SK-N-SH (cell line): ENCODE measurements at regions of chr18 and their contacts with region 1.

Region 1: GRCh38 chr18:31722369-31722957 is 38.1 kb upstream of the B4GALT6 start:
- DNase-seq: peak; percentile 76
- H3K4me3 ChIP-seq: peak overlapping the region in 1 of 2 experiments; percentile 27; a peak in 1 of 4 replicates
- H3K27ac ChIP-seq: no peak overlapping the region
- H3K4me1 ChIP-seq: peaks cover 0 to 4% of the 10 kb centered on the region in 2 experiments; a peak in 1 of 4 replicates
- H3K27me3 ChIP-seq: no peaks in the 10 kb centered on the region; the same call in 1 of the 2 replicates
- CTCF ChIP-seq: peak; percentile 86
- EP300 ChIP-seq: no peak
- RAD21 ChIP-seq: peak; percentile 85

Region 2: GRCh38 chr18:31546476-31546875 is 176.0 kb before region 1 on chr18:
- CTCF ChIA-PET with region 1: interaction called, 25 read pairs
- POLR2A ChIA-PET with region 1: no interaction called
- DNase-seq: no peak
- H3K4me3 ChIP-seq: no peak overlapping the region
- H3K27ac ChIP-seq: no peak overlapping the region
- H3K4me1 ChIP-seq: no peaks in the 10 kb centered on the region
- H3K27me3 ChIP-seq: peaks cover 9% of the 10 kb centered on the region; the same call in 1 of the 2 replicates
- CTCF ChIP-seq: no peak
- EP300 ChIP-seq: no peak
- RAD21 ChIP-seq: no peak

Region 3: GRCh38 chr18:31563778-31564177 is 158.7 kb before region 1 on chr18:
- CTCF ChIA-PET with region 1: interaction called, 48 read pairs
- POLR2A ChIA-PET with region 1: no interaction called
- DNase-seq: peak; percentile 15
- H3K4me3 ChIP-seq: no peak overlapping the region
- H3K27ac ChIP-seq: no peak overlapping the region
- H3K4me1 ChIP-seq: no peaks in the 10 kb centered on the region
- H3K27me3 ChIP-seq: no peaks in the 10 kb centered on the region; the same call in 1 of the 2 replicates
- CTCF ChIP-seq: no peak
- EP300 ChIP-seq: no peak
- RAD21 ChIP-seq: no peak

Region 4: GRCh38 chr18:31685097-31686082 is 37.1 kb before region 1 on chr18:
- CTCF ChIA-PET with region 1: interaction called, 16 read pairs
- POLR2A ChIA-PET with region 1: no interaction called
- DNase-seq: peak; percentile 95
- H3K4me3 ChIP-seq: peak overlapping the region; percentile 56 to 69
- H3K27ac ChIP-seq: peak overlapping the region in 1 of 2 experiments; percentile 84; a peak in 3 of 4 replicates
- H3K4me1 ChIP-seq: peaks cover 0 to 7% of the 10 kb centered on the region in 2 experiments; a peak in 3 of 4 replicates
- H3K27me3 ChIP-seq: no peaks in the 10 kb centered on the region
- CTCF ChIP-seq: peak; percentile 48
- EP300 ChIP-seq: no peak
- RAD21 ChIP-seq: no peak

Region 5: GRCh38 chr18:31707815-31708214 is 14.6 kb before region 1 on chr18:
- CTCF ChIA-PET with region 1: interaction called, 12 read pairs
- POLR2A ChIA-PET with region 1: no interaction called
- DNase-seq: no peak
- H3K4me3 ChIP-seq: no peak overlapping the region
- H3K27ac ChIP-seq: no peak overlapping the region
- H3K4me1 ChIP-seq: no peaks in the 10 kb centered on the region
- H3K27me3 ChIP-seq: no peaks in the 10 kb centered on the region
- CTCF ChIP-seq: no peak
- EP300 ChIP-seq: no peak
- RAD21 ChIP-seq: no peak

Region 6: DNA sequence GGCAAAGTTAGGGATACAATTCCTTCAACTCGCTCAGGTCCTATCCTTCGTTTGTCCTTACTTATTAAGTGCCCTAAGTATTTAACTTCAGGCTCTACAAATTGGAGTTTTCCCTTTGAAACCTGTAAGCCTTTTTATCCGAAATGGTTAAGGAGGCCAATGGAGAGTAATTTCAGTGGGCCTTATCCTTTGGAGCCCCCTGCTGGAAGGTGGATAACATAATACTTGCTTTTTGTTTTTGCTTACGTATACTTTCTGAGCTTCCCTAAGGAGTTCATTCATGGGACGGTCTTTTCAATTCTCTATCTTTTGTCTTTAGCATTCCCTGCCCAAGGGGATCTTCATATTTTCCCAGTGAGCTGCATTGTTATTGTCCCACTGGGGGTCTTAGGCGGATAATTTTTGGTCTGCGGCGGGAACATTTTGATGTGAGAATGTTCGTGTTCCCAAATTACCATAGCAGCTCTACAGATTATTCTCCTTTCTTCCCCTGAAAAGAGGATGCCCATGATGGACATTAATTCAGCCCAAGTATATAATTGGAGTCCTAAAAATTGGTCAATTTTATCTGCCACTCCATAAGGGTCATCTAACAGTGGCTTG is 254.9 kb after region 1 on chr18:
- CTCF ChIA-PET with region 1: interaction called, 11 read pairs
- POLR2A ChIA-PET with region 1: no interaction called
- DNase-seq: peak; percentile 57
- H3K4me3 ChIP-seq: no peak overlapping the region; a peak in 1 of 4 replicates
- H3K27ac ChIP-seq: no peak overlapping the region
- H3K4me1 ChIP-seq: no peaks in the 10 kb centered on the region
- H3K27me3 ChIP-seq: no peaks in the 10 kb centered on the region
- CTCF ChIP-seq: peak; percentile 79
- EP300 ChIP-seq: no peak
- RAD21 ChIP-seq: peak; percentile 88